HEK293 (cell line): ENCODE measurements at regions of chr11 and their contacts with region 1.

Region 1: DNA sequence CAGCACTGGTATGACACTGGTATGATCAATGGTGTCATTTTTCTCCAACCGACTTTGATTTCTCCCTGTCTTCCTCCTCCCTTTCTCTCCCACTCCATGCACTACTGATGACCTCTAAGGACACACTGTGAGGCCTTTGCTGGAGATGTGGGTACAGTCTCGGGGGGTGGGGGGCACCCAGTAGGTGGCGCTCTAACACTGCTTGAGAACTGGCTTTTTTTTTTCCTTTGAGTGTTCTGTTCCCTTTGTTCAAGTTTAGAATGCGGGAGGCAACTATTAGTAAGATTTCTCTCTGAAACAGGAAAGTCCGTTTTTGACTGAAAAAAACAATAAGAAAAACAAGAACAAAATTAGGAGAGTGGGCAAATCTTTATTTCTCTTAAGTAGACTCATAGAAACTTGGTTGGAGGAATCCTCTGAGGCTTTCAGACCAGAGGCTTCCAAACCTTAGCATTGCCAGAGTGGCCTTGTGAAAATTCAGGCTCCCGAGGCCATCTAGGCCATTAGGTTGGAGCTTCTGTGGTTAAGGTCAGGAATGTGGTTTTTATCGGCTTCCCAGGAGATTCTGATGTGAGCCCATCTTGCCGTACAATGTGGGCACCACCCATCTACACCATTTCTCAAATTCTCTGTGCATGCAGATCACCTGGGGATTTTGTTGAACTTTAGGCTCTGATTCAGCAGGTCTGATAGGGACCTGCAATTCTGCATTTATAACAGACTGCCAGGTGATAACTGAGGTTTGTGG is 43.2 kb downstream of the PANX1 start:
- H3K4me3 ChIP-seq: no peak overlapping the region
- H3K27ac ChIP-seq: no peak overlapping the region
- H3K4me1 ChIP-seq: no peaks in the 10 kb centered on the region
- CTCF ChIP-seq: peak; percentile 45; the same call in 1 of the 2 replicates

Region 2: GRCh38 chr11:94151903-94152677 is 19.8 kb before region 1 on chr11:
- CTCF ChIA-PET with region 1: interaction called, 14 read pairs
- POLR2A ChIA-PET with region 1: no interaction called
- H3K4me3 ChIP-seq: no peak overlapping the region
- H3K27ac ChIP-seq: no peak overlapping the region; the same call in 1 of the 2 replicates
- H3K4me1 ChIP-seq: peaks cover 33% of the 10 kb centered on the region
- CTCF ChIP-seq: no peak

Region 3: DNA sequence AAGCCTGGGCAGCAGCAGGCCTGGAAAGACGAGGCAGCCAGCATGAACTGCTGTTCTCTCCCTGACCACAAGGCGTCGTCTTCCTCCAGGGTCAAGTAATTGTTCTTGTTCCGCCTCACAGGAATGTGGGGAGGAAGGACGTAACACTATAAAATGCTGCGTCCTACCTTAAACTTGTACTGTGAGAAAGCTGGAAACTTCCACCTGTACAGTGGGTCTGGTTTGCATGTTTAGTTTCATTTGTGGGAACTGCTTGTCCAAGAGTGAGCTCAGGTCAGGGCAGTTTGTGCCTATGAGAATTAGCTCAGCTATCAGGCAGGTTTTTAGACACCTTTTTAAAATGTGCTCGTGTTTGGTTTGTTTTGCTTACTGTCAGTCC is 12.0 kb after region 1 on chr11:
- CTCF ChIA-PET with region 1: interaction called, 26 read pairs
- POLR2A ChIA-PET with region 1: no interaction called
- H3K4me3 ChIP-seq: no peak overlapping the region
- H3K27ac ChIP-seq: no peak overlapping the region
- H3K4me1 ChIP-seq: no peaks in the 10 kb centered on the region
- CTCF ChIP-seq: peak; percentile 33; the same call in 1 of the 2 replicates

Region 4: DNA sequence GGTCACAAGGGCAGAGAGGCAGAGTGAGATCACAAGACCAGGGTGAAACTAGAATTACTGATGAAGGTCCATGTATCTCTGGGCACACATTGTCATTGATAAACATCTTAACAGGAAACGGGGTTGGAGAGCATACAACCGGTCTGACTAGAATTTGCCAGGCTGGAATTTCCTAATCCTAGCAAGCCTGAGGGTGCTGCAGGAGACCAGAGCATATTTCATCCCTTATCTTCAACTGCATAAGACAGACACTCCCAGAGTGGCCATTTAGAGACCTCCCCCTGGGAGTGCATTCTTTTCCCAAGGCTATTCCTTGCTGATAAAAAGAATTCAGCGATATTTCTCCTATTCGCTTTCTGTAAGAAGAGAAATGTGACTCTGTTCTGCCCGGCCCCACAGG is 47.9 kb after region 1 on chr11:
- CTCF ChIA-PET with region 1: no interaction called
- POLR2A ChIA-PET with region 1: no interaction called
- H3K4me3 ChIP-seq: no peak overlapping the region
- H3K27ac ChIP-seq: no peak overlapping the region
- H3K4me1 ChIP-seq: no peaks in the 10 kb centered on the region
- CTCF ChIP-seq: no peak